Panc1 (cell line): ENCODE measurements at regions of chrX and their contacts with region 1.

Region 1: GRCh38 chrX:13511944-13512330 is 57.5 kb upstream of the EGFL6 start:
- DNase-seq: no peak
- ATAC-seq: no peak
- H3K4me3 ChIP-seq: no peak overlapping the region
- H3K27ac ChIP-seq: no peak overlapping the region
- H3K4me1 ChIP-seq: no peaks in the 10 kb centered on the region
- H3K27me3 ChIP-seq: no peaks in the 10 kb centered on the region
- CTCF ChIP-seq: no peak

Region 2: GRCh38 chrX:13364230-13364857 is 147.6 kb before region 1 on chrX:
- CTCF ChIA-PET with region 1: no interaction called
- POLR2A ChIA-PET with region 1: no interaction called
- in situ Hi-C with region 1: no loop called
- intact Hi-C with region 1: no loop called
- DNase-seq: no peak
- ATAC-seq: no peak
- H3K4me3 ChIP-seq: no peak overlapping the region
- H3K27ac ChIP-seq: no peak overlapping the region
- H3K4me1 ChIP-seq: no peaks in the 10 kb centered on the region
- H3K27me3 ChIP-seq: no peaks in the 10 kb centered on the region
- CTCF ChIP-seq: no peak

Region 3: GRCh38 chrX:13638826-13639225 is 126.9 kb after region 1 on chrX:
- CTCF ChIA-PET with region 1: no interaction called
- POLR2A ChIA-PET with region 1: interaction called, 10 read pairs
- in situ Hi-C with region 1: no loop called
- intact Hi-C with region 1: no loop called
- DNase-seq: no peak
- ATAC-seq: no peak
- H3K4me3 ChIP-seq: no peak overlapping the region
- H3K27ac ChIP-seq: no peak overlapping the region
- H3K4me1 ChIP-seq: no peaks in the 10 kb centered on the region
- H3K27me3 ChIP-seq: no peaks in the 10 kb centered on the region
- CTCF ChIP-seq: no peak

Region 4: DNA sequence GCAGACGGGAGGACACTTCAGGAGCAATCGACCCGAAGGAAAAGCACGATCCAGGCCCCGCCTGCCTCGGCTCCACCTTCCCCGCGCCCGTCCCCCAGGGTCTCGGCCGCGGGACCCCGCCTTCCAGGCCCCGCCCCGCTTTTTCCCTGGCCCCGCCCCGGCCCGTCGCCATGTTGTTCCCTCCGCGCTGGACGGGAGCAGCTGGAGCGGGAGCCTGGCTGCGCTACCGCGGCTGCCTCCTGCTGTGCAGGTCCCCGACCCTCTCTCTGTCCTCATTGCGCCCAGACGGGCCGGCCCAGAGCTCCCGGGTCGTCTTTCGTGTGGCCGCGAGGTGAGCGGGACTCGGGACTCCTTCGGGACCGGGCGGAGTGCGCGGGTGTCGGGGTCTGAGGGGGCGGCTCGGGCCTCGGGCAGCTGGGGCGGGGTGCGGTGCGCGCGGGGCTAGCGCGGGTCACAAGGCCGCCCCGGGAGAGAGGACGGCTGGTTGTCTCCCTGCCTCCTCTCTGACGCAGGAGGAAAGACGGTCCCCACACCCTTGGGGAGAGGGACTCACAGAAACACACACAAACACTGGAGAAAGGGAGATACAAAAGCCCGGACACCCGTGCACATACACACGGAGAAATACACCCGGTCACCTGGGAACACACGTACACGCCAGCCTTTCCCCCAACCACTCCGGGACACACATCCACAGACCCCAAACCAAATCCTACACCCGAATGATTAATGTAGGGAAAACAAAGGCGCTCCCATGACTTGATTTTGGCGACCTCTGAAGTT is 177.2 kb after region 1 on chrX and contains the start of gene RAB9A:
- CTCF ChIA-PET with region 1: no interaction called
- POLR2A ChIA-PET with region 1: no interaction called
- in situ Hi-C with region 1: no loop called
- intact Hi-C with region 1: no loop called
- DNase-seq: no peak
- ATAC-seq: peak; percentile 97
- H3K4me3 ChIP-seq: peak within 1 kb of the TSS; percentile 69 to 84
- H3K27ac ChIP-seq: peak within 1 kb of the TSS; percentile 83
- H3K4me1 ChIP-seq: peaks cover 2% of the 10 kb centered on the region
- H3K27me3 ChIP-seq: no peaks in the 10 kb centered on the region
- CTCF ChIP-seq: no peak
- total RNA-seq, gene RAB9A: 15.3 TPM